Stomach (tissue), 19 donors: ENCODE measurements at regions of chr12 and their contacts with region 1.

Region 1: GRCh38 chr12:1916371-1917171 is 1.9 kb downstream of the CACNA2D4 start:
- DNase-seq: peak; percentile 27 to 63
- H3K4me3 ChIP-seq: no peak overlapping the region
- H3K27ac ChIP-seq: no peak overlapping the region
- H3K4me1 ChIP-seq: peaks cover 0 to 11% (median 9%) of the 10 kb centered on the region in 4 donors
- H3K27me3 ChIP-seq: no peaks in the 10 kb centered on the region
- CTCF ChIP-seq: no peak
- EP300 ChIP-seq: no peak
- POLR2A ChIP-seq: no peak

Region 2: GRCh38 chr12:1820191-1820895 is 96.2 kb before region 1 on chr12 and contains the start of gene LRTM2:
- intact Hi-C with region 1: loop called (anchors 10 kb)
- DNase-seq: no peak
- H3K4me3 ChIP-seq: no peak within 1 kb of the TSS
- H3K27ac ChIP-seq: no peak within 1 kb of the TSS
- H3K4me1 ChIP-seq: peaks cover 0 to 13% (median 4%) of the 10 kb centered on the region in 4 donors
- H3K27me3 ChIP-seq: peaks cover 10 to 72% (median 34%) of the 10 kb centered on the region in 3 donors
- CTCF ChIP-seq: no peak
- EP300 ChIP-seq: no peak
- POLR2A ChIP-seq: no peak
- total RNA-seq, gene LRTM2: not detected

Region 3: DNA sequence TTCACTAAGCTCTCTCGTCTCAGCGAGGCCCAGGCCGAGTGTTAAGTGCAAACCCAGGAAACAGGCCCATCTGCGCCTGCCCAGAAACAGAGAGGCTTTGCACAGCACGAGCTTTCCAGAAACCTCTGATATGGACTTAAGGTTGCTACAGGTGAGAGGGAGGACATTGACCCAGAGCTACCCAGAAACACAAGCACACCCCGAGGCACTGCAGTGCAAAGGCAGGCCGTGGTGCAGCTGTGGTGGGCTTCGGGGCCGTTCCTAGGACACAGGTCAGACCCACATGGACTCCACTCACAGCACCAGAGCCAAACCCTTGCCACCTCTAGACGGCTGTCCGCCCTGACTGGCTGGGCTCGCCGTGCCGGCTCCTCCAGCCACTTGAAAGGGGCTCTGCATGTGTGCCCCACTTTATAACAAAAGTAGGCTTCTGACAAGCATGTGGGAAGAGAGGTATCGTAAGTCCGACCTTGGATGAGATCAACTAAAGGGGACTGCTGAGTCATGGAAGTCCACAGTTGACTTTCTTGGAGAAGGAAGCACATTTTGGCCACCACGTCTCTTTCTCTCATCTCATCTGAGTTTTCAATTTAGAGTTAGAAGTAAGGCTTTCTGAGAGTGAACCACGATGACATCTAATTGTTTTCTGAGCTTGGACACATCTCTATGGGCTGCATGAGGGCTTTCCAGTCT is 36.3 kb before region 1 on chr12:
- intact Hi-C with region 1: no loop called
- DNase-seq: no peak
- H3K4me3 ChIP-seq: no peak overlapping the region
- H3K27ac ChIP-seq: no peak overlapping the region
- H3K4me1 ChIP-seq: peaks cover 0 to 1% (median 0%) of the 10 kb centered on the region in 4 donors
- H3K27me3 ChIP-seq: peaks cover 0 to 19% (median 0%) of the 10 kb centered on the region in 3 donors
- CTCF ChIP-seq: no peak
- EP300 ChIP-seq: no peak
- POLR2A ChIP-seq: no peak